K562 (cell line): ENCODE measurements at regions of chr12 and their contacts with region 1.

Region 1: DNA sequence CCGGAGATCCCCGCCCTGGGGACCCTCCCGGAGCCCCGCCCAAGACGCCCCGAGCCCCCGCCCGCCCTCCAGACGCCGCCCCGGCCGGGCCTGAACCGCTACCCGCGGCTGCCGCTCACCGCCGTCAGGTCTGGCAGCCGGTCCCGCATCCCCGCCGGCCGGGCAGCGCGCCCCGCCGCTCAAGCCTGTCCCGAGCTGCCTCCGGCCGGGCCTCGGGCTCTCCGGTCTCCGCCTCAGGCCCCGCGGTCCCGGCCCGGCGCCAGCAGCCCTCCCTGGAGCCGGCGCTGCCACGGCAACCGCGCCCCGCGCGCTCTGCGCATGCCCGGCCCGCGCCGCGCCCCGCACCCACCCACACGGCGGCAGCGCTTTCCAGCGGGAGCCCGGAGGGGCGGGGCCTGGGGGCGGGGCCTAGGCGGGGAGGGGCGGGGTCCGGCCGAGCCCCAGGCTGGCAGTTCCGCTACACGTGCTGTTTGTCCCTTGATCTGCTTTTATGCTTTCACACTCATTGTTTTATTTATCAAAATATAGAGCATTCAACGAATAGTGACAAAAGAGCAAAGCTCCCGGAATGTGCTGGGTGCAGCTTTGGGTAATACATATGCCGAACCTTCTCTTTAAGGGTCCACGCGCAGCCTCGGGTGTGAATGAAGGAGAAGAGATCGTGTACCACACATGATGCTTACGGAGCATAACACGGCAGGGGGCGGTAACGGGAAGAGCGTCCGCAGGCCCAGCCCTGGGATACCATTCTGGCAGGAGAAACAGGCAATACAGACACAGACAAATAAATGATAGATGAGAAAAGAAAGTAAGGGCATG is at the start of gene STX2:
- DNase-seq: peak; percentile 89 to 97 (median 96)
- ATAC-seq: peak; percentile 82
- H3K4me3 ChIP-seq: peak within 1 kb of the TSS; percentile 69
- H3K27ac ChIP-seq: peak within 1 kb of the TSS; percentile 72
- H3K4me1 ChIP-seq: peaks cover 33% of the 10 kb centered on the region in 2 experiments
- H3K27me3 ChIP-seq: no peaks in the 10 kb centered on the region
- CTCF ChIP-seq: peak; percentile 63 to 69 (median 65)
- EP300 ChIP-seq: peak; percentile 21; the same call in 1 of the 2 replicates
- POLR2A ChIP-seq: peak; percentile 52; the same call in 1 of the 2 replicates
- RAD21 ChIP-seq: peak; percentile 45 to 69
- polyA plus RNA-seq, gene STX2: 22.2 to 24.7 TPM

Region 2: GRCh38 chr12:130849561-130850417 is 10.6 kb after region 1 on chr12:
- CTCF ChIA-PET with region 1: interaction called, 4 read pairs
- POLR2A ChIA-PET with region 1: interaction called, 4 read pairs
- in situ Hi-C with region 1: no loop called
- intact Hi-C with region 1: loop called (anchors 2 kb)
- DNase-seq: no peak
- ATAC-seq: no peak
- H3K4me3 ChIP-seq: no peak overlapping the region
- H3K27ac ChIP-seq: peak overlapping the region; percentile 16; the same call in 1 of the 3 replicates
- H3K4me1 ChIP-seq: peaks cover 25 to 34% of the 10 kb centered on the region in 2 experiments; a peak in 4 of 5 replicates
- H3K27me3 ChIP-seq: no peaks in the 10 kb centered on the region
- CTCF ChIP-seq: no peak
- EP300 ChIP-seq: no peak
- POLR2A ChIP-seq: no peak
- RAD21 ChIP-seq: no peak

Region 3: GRCh38 chr12:130871286-130872178 is 32.4 kb after region 1 on chr12 and contains the start of gene RAN:
- CTCF ChIA-PET with region 1: no interaction called
- POLR2A ChIA-PET with region 1: interaction called, 7 read pairs
- in situ Hi-C with region 1: no loop called
- intact Hi-C with region 1: loop called (anchors 2 kb)
- DNase-seq: peak; percentile 94 to 99 (median 96)
- ATAC-seq: peak; percentile 79
- H3K4me3 ChIP-seq: peak within 1 kb of the TSS; percentile 81
- H3K27ac ChIP-seq: peak within 1 kb of the TSS; percentile 99
- H3K4me1 ChIP-seq: peaks cover 27 to 35% of the 10 kb centered on the region in 2 experiments; a peak in 4 of 5 replicates
- H3K27me3 ChIP-seq: no peaks in the 10 kb centered on the region
- CTCF ChIP-seq: no peak
- EP300 ChIP-seq: peak; percentile 32; the same call in 1 of the 2 replicates
- POLR2A ChIP-seq: peak; percentile 87
- RAD21 ChIP-seq: no peak
- polyA plus RNA-seq, gene RAN: 3,304 to 3,469 TPM